ENCODE measurements at regions of chr11 and their contacts with region 1.

Region 1: GRCh38 chr11:18526521-18527296 is at the start of gene TSG101:
- DNase-seq: peak; percentile 88
- ATAC-seq: peak; percentile 95
- H3K4me3 ChIP-seq: peak within 1 kb of the TSS; percentile 83 to 94
- H3K27ac ChIP-seq: peak within 1 kb of the TSS; percentile 64
- H3K4me1 ChIP-seq: peaks cover 6 to 23% of the 10 kb centered on the region in 2 experiments; a peak in 3 of 4 replicates
- H3K27me3 ChIP-seq: no peaks in the 10 kb centered on the region
- CTCF ChIP-seq: no peak
- POLR2A ChIP-seq: peak; percentile 72
- RAD21 ChIP-seq: no peak
- total RNA-seq, gene TSG101: 61.9 TPM

Region 2: DNA sequence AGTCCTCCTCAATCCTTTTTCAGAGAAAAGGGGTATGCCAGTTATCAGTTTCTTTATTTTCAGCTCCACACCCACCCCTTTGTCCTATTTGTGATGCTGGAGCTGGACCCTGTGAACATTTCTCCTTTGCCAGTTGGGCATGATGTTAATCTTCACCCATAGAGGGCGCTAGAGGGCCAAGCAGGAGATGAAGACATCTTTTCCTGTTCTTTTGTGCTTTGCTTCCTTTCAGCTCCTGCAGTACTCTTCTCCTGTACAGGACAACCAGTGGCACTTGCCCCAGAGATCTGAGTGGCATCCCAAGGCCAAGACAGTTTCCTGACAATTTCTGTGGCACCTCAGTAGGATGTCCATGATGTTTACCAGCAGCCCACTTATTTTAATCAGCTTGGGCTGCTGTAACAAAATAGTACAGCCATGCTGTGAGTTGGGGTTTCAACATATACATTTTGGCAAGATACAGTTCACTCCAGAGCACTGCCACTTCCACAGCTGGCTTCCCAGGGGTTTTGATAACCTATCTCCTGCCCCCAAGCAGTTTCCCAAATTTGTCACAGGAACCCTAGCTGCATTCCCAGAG is 282.8 kb before region 1 on chr11:
- CTCF ChIA-PET with region 1: interaction called, 6 read pairs
- POLR2A ChIA-PET with region 1: no interaction called
- RAD21 ChIA-PET with region 1: no interaction called
- intact Hi-C with region 1: loop called (anchors 2 kb)
- DNase-seq: peak; percentile 63
- ATAC-seq: peak; percentile 87
- H3K4me3 ChIP-seq: no peak overlapping the region
- H3K27ac ChIP-seq: no peak overlapping the region
- H3K4me1 ChIP-seq: no peaks in the 10 kb centered on the region; a peak in 1 of 4 replicates
- H3K27me3 ChIP-seq: no peaks in the 10 kb centered on the region
- CTCF ChIP-seq: peak; percentile 65 to 94 (median 80); a peak in 5 of 6 replicates
- POLR2A ChIP-seq: no peak
- RAD21 ChIP-seq: peak; percentile 85

Region 3: GRCh38 chr11:18321980-18322711 is 204.6 kb before region 1 on chr11 and contains the starts of genes GTF2H1 and HPS5:
- CTCF ChIA-PET with region 1: no interaction called
- POLR2A ChIA-PET with region 1: no interaction called
- RAD21 ChIA-PET with region 1: no interaction called
- intact Hi-C with region 1: loop called (anchors 10 kb)
- DNase-seq: peak; percentile 98
- ATAC-seq: peak; percentile 92
- H3K4me3 ChIP-seq: peak within 1 kb of the TSS; percentile 60 to 82
- H3K27ac ChIP-seq: peak within 1 kb of the TSS; percentile 69
- H3K4me1 ChIP-seq: peaks cover 9 to 21% of the 10 kb centered on the region in 2 experiments; a peak in 3 of 4 replicates
- H3K27me3 ChIP-seq: no peaks in the 10 kb centered on the region
- CTCF ChIP-seq: no peak
- POLR2A ChIP-seq: peak; percentile 90
- RAD21 ChIP-seq: peak; percentile 23; the same call in 1 of the 2 replicates
- total RNA-seq, gene GTF2H1: 37.3 TPM
- total RNA-seq, gene HPS5: 19.6 TPM

Region 4: DNA sequence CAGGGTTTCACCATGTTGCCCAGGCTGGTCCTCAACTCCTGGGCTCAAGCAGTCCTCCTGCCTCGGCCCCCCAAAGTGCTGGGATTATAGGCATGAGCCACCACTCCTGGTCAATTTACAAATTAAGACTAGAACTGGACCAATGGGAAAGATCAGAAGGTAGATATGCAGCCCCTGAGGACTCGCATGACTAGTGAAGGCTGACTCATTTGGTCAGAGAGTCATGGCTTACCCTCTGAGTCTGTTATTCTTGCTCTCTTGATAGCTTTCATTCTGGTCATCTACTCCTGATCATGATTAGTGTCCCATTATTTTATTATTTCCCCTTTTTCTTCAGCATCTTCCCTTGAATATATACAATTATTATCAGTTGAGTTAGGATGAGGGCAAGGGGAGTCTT is 73.8 kb before region 1 on chr11:
- CTCF ChIA-PET with region 1: no interaction called
- POLR2A ChIA-PET with region 1: no interaction called
- RAD21 ChIA-PET with region 1: no interaction called
- intact Hi-C with region 1: no loop called
- DNase-seq: no peak
- ATAC-seq: peak; percentile 35; the same call in 1 of the 2 replicates
- H3K4me3 ChIP-seq: no peak overlapping the region
- H3K27ac ChIP-seq: no peak overlapping the region
- H3K4me1 ChIP-seq: peaks cover 0 to 5% of the 10 kb centered on the region in 2 experiments; a peak in 3 of 4 replicates
- H3K27me3 ChIP-seq: no peaks in the 10 kb centered on the region
- CTCF ChIP-seq: no peak
- POLR2A ChIP-seq: no peak
- RAD21 ChIP-seq: no peak

Region 5: DNA sequence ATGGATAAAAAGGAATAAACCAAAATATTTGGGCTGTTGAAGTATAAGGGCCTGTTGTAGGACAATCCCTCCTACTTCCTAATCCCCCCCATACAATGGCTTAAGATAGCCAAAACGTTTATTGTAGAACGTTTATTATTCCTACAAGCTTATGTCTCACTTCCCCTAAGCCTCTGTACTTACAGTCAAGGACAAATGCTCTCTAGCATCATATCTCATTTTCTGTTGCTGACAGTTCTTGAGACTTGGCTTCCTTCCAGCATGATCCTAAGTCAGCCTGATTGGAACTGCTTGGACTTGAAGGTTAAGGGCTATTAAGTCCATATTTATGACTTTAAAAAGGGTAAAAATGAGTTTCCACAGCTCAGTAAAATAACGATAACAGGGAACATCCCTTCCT is 81.7 kb after region 1 on chr11:
- CTCF ChIA-PET with region 1: no interaction called
- POLR2A ChIA-PET with region 1: no interaction called
- RAD21 ChIA-PET with region 1: no interaction called
- intact Hi-C with region 1: no loop called
- DNase-seq: no peak
- ATAC-seq: no peak
- H3K4me3 ChIP-seq: no peak overlapping the region
- H3K27ac ChIP-seq: no peak overlapping the region
- H3K4me1 ChIP-seq: no peaks in the 10 kb centered on the region
- H3K27me3 ChIP-seq: no peaks in the 10 kb centered on the region
- CTCF ChIP-seq: no peak
- POLR2A ChIP-seq: no peak
- RAD21 ChIP-seq: no peak

Region 6: GRCh38 chr11:18634140-18635032 is 107.7 kb after region 1 on chr11 and contains the start of gene SPTY2D1:
- CTCF ChIA-PET with region 1: no interaction called
- POLR2A ChIA-PET with region 1: interaction called, 3 read pairs
- RAD21 ChIA-PET with region 1: no interaction called
- intact Hi-C with region 1: loop called (anchors 2 kb)
- DNase-seq: peak; percentile 99
- ATAC-seq: peak; percentile 98
- H3K4me3 ChIP-seq: peak within 1 kb of the TSS; percentile 92 to 97
- H3K27ac ChIP-seq: peak within 1 kb of the TSS; percentile 63
- H3K4me1 ChIP-seq: peaks cover 6 to 16% of the 10 kb centered on the region in 2 experiments
- H3K27me3 ChIP-seq: no peaks in the 10 kb centered on the region
- CTCF ChIP-seq: no peak
- POLR2A ChIP-seq: peak; percentile 91
- RAD21 ChIP-seq: no peak
- total RNA-seq, gene SPTY2D1: 19.7 TPM

Region 7: DNA sequence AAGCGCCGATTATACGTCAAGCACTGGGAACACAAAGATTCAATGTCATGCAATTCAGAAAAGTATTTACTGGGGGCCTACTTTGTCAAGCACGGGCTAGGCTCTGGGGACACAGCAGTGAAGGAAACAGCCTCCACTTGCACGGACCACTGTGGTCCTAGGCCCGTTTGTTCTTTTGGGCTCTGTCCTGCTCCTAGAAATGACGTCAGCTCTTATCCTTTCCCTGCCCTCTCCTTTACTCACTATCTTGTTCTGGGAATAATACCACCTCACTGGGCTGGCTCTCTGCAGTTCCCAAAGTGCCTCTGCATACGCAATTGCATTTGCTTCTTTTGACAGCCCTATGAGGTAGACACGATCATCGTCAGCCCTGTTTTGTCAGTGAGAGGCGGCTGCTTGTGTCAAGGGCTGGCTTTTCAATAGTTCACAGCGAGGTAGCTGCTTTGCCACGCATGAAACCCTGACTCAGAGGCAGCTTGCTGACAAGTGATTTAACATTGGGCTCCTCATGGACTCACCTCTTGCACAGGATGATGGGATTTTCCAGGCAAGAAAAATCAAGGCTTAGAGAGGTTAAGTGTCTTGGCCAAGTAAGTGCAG is 222.2 kb after region 1 on chr11:
- CTCF ChIA-PET with region 1: no interaction called
- POLR2A ChIA-PET with region 1: no interaction called
- RAD21 ChIA-PET with region 1: no interaction called
- intact Hi-C with region 1: no loop called
- DNase-seq: no peak
- ATAC-seq: no peak
- H3K4me3 ChIP-seq: no peak overlapping the region
- H3K27ac ChIP-seq: no peak overlapping the region
- H3K4me1 ChIP-seq: peaks cover 0 to 6% of the 10 kb centered on the region in 2 experiments; a peak in 2 of 4 replicates
- H3K27me3 ChIP-seq: no peaks in the 10 kb centered on the region
- CTCF ChIP-seq: no peak
- POLR2A ChIP-seq: no peak
- RAD21 ChIP-seq: no peak

Measured in HCT116 (cell line).